Tibial artery (tissue), 4 donors: ENCODE measurements at regions of chr15 and their contacts with region 1.

Region 1: DNA sequence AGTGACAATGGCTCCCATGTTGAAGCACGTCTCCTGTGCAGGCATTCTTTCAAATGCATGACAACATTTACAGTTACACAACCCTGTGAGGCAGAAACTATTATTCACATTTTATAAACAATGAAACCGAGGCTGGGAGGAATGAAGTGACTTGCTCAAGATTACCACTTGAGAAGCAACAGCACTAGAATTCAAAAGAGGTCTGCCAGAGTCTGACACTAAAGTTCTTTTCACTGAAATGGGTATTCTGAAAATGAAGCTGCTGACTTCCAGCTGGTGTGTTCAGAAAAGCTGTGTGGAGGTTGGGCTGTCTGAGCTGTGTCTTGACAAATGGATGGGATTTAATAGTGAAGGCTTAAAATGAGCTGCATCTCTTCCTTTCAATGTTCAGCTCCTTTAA is 104.4 kb downstream of the THSD4 start:
- DNase-seq: no peak
- H3K4me3 ChIP-seq: no peak overlapping the region
- H3K27ac ChIP-seq: peak overlapping the region; percentile 63 to 64
- H3K4me1 ChIP-seq: peaks cover 0 to 26% (median 21%) of the 10 kb centered on the region in 4 donors
- H3K27me3 ChIP-seq: no peaks in the 10 kb centered on the region
- CTCF ChIP-seq: no peak

Region 2: DNA sequence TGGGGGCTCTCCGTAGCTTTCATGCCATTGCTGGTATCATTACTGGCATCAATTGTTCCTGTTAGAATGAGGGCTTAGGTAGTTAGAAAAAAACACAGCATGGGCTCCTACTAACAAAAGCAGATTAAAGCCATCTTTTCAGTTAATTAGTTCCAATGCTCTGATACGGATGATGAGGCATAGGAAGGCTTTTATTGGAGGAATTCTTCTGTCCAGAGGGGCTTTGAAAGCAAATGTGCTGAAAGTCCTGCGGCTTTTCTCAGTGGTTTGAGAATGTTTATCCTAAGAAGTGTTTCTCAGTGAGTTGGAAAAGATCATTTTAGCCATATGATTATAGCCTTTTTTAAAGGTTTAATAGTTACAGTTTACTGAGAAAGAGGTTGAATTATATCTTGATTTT is 94.2 kb after region 1 on chr15:
- intact Hi-C with region 1: loop called (anchors 10 kb)
- DNase-seq: no peak
- H3K4me3 ChIP-seq: no peak overlapping the region
- H3K27ac ChIP-seq: no peak overlapping the region
- H3K4me1 ChIP-seq: peaks cover 0 to 16% (median 5%) of the 10 kb centered on the region in 4 donors
- H3K27me3 ChIP-seq: no peaks in the 10 kb centered on the region
- CTCF ChIP-seq: no peak